ENCODE measurements at regions of chr3 and their contacts with region 1.

Region 1: DNA sequence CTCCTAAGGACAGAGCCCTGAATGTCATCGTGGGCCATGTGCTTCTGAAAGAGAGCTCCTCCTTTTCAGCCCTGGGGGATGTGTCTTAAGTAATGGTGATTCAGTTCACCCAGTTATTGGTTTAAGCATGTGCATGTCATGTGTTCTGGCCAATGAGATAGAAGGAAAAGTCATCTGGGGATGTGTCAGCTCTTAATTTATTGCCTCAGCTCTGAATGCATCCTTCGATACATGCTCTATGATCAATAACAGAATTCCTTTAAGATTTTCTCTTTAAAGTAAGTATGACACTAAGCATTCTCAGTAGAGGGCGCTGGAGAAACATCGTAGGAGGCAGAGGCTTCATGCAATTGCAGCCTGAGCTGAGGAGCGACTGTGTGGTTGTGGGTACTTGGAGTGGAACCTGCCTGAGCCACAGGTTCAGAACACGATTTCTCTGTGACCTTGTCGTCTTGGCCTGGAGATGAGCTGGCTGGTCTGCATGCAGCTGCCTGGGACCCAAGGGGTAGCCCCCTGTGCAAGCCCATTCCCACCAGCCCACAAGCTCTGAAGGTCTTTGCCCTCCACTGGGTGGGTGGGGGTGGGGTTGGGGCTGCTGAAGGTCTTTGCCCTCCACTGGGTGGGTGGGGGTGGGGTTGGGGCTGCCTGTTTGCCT is 69.5 kb downstream of the C3orf38 start:
- DNase-seq: no peak
- H3K4me3 ChIP-seq: no peak overlapping the region
- H3K27ac ChIP-seq: no peak overlapping the region
- H3K4me1 ChIP-seq: no peaks in the 10 kb centered on the region
- H3K27me3 ChIP-seq: no peaks in the 10 kb centered on the region
- CTCF ChIP-seq: peak in 2 of 4 experiments; percentile 19 to 24
- POLR2A ChIP-seq: no peak

Region 2: DNA sequence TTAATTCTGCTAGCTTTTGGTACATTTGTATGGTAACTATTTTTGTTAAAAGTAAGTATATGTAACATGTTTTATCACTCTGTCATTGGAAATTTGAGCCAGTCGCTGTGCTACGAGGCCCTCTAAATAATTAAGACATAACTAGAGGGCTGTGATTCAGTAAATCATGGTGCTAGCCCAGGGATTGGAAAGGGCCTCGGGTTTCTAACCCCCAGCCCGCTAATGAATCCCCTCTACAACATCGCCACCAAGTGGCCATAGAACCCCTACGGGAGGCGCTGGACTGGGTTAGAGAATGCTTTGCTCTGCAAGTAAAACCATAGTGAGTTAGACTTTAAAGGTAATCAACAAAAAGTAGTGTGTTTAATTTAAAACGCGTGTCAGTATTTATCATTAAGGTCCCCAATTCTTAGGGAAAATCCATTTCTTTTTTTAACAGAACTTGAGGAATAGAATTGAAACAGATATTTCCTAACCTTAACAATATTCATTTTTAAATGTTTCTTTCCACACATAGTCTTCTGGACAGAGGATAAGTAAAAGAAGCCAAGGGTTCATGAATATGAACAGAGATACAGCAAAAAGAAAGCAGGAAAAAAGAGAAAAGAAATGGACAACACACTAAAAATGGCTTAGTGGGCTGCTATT is 1632.8 kb after region 1 on chr3:
- intact Hi-C with region 1: loop called (anchors 10 kb)
- DNase-seq: peak; percentile 5
- H3K4me3 ChIP-seq: no peak overlapping the region
- H3K27ac ChIP-seq: no peak overlapping the region
- H3K4me1 ChIP-seq: no peaks in the 10 kb centered on the region
- H3K27me3 ChIP-seq: no peaks in the 10 kb centered on the region
- CTCF ChIP-seq: peak in 3 of 4 experiments; percentile 12 to 27 (median 23)
- POLR2A ChIP-seq: no peak